AG04450 (cell line): ENCODE measurements at regions of chr14 and their contacts with region 1.

Region 1: GRCh38 chr14:37241198-37241597 is 43.5 kb downstream of the MIPOL1 start:
- DNase-seq: no peak
- H3K4me3 ChIP-seq: no peak overlapping the region
- H3K27ac ChIP-seq: no peak overlapping the region
- H3K27me3 ChIP-seq: no peaks in the 10 kb centered on the region
- CTCF ChIP-seq: no peak

Region 2: GRCh38 chr14:37223947-37224474 is 17.2 kb before region 1 on chr14:
- CTCF ChIA-PET with region 1: interaction called, 86 read pairs
- POLR2A ChIA-PET with region 1: no interaction called
- DNase-seq: no peak
- H3K4me3 ChIP-seq: no peak overlapping the region
- H3K27ac ChIP-seq: no peak overlapping the region
- H3K27me3 ChIP-seq: no peaks in the 10 kb centered on the region
- CTCF ChIP-seq: no peak

Region 3: DNA sequence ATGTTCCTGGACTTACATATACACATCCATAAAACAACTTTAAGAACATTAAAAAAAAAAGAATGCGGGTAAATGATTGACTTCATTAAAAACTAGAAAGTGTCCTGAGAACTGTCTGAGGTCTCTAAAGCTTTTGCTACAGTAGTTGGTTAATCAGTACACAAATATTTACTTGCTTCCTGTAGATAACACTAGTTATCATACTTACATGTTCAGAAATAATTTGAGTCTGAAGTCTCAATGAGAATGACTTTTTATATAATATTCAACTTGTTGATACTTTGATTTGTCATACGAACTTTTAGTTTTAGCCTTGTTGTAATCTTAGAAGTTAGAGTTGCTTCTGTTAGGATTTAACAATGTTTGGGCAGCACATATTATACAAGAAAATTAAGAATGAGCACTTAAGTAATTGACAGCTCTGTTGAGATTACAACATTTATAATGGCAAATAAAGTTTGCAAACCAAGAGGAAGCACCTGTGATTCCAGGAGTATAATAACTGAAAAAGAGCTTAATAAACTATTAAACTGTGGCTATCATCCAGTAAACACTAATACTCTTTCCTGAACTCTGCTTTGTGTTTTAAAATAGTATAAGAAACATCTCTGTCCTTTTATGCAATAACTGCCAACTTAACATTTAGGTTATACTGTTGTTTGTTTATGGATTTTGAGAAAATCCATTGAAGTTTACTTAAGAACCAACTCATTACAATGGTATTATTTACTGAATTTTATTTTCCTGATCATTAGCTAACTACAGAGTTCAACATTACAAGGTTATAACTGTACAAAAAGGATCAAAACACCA is 88.2 kb after region 1 on chr14:
- CTCF ChIA-PET with region 1: no interaction called
- POLR2A ChIA-PET with region 1: no interaction called
- DNase-seq: no peak
- H3K4me3 ChIP-seq: no peak overlapping the region
- H3K27ac ChIP-seq: no peak overlapping the region
- H3K27me3 ChIP-seq: no peaks in the 10 kb centered on the region
- CTCF ChIP-seq: no peak